H1 (cell line): ENCODE measurements at regions of chr3 and their contacts with region 1.

Region 1: GRCh38 chr3:101703169-101703568 is 16.7 kb upstream of the RPL24 start:
- DNase-seq: no peak
- H3K4me3 ChIP-seq: no peak overlapping the region
- H3K27ac ChIP-seq: no peak overlapping the region
- H3K4me1 ChIP-seq: no peaks in the 10 kb centered on the region
- H3K27me3 ChIP-seq: no peaks in the 10 kb centered on the region
- CTCF ChIP-seq: no peak
- EP300 ChIP-seq: no peak
- POLR2A ChIP-seq: no peak
- RAD21 ChIP-seq: no peak

Region 2: GRCh38 chr3:101724329-101725193 is 21.4 kb after region 1 on chr3 and contains the start of gene CEP97:
- CTCF ChIA-PET with region 1: interaction called, 38 read pairs
- POLR2A ChIA-PET with region 1: interaction called, 4 read pairs
- DNase-seq: peak; percentile 70 to 92
- H3K4me3 ChIP-seq: peak within 1 kb of the TSS; percentile 92 to 99 (median 98)
- H3K27ac ChIP-seq: peak within 1 kb of the TSS; percentile 25; the same call in 1 of the 2 replicates
- H3K4me1 ChIP-seq: no peaks in the 10 kb centered on the region
- H3K27me3 ChIP-seq: no peaks in the 10 kb centered on the region
- CTCF ChIP-seq: no peak
- EP300 ChIP-seq: no peak
- POLR2A ChIP-seq: peak in 1 of 2 experiments; percentile 56; a peak in 1 of 3 replicates
- RAD21 ChIP-seq: no peak
- total RNA-seq, gene CEP97: 13.2 and 15.1 TPM in 2 replicates

Region 3: GRCh38 chr3:101803173-101803782 is 100.1 kb after region 1 on chr3:
- CTCF ChIA-PET with region 1: no interaction called
- POLR2A ChIA-PET with region 1: no interaction called
- DNase-seq: no peak
- H3K4me3 ChIP-seq: no peak overlapping the region
- H3K27ac ChIP-seq: no peak overlapping the region
- H3K4me1 ChIP-seq: no peaks in the 10 kb centered on the region
- H3K27me3 ChIP-seq: no peaks in the 10 kb centered on the region
- CTCF ChIP-seq: peak in 2 of 3 experiments; percentile 45 to 77; a peak in 2 of 4 replicates
- EP300 ChIP-seq: no peak
- POLR2A ChIP-seq: no peak
- RAD21 ChIP-seq: peak; percentile 53